B cell (primary cell): ENCODE measurements at regions of chr17 and their contacts with region 1.

Region 1: GRCh38 chr17:49230636-49231562 is at the start of gene PHOSPHO1:
- DNase-seq: peak; percentile 93
- ATAC-seq: peak; percentile 93
- H3K4me3 ChIP-seq: peak within 1 kb of the TSS; percentile 62 to 93 (median 63)
- H3K4me3 Mint-ChIP-seq: peak within 1 kb of the TSS; percentile 93
- H3K27ac ChIP-seq: no peak within 1 kb of the TSS
- H3K27ac Mint-ChIP-seq: peak within 1 kb of the TSS; percentile 78
- H3K4me1 ChIP-seq: peaks cover 25 to 32% of the 10 kb centered on the region in 2 donors
- H3K4me1 Mint-ChIP-seq: peaks cover 21% of the 10 kb centered on the region
- H3K27me3 ChIP-seq: peaks cover 0 to 18% (median 8%) of the 10 kb centered on the region in 4 experiments
- H3K27me3 Mint-ChIP-seq: peaks cover 19% of the 10 kb centered on the region
- CTCF ChIP-seq: no peak
- total RNA-seq, gene PHOSPHO1: 0.15 TPM in 1 of 2 replicates, not detected in the other

Region 2: GRCh38 chr17:49180303-49180702 is 50.6 kb before region 1 on chr17:
- CTCF ChIA-PET with region 1: interaction called, 332 read pairs
- POLR2A ChIA-PET with region 1: interaction called, 7 read pairs
- intact Hi-C with region 1: loop called (anchors 1 kb)
- DNase-seq: peak; percentile 77
- ATAC-seq: peak; percentile 53
- H3K4me3 ChIP-seq: no peak overlapping the region
- H3K4me3 Mint-ChIP-seq: no peak overlapping the region
- H3K27ac ChIP-seq: no peak overlapping the region
- H3K27ac Mint-ChIP-seq: no peak overlapping the region
- H3K4me1 ChIP-seq: peaks cover 0 to 4% of the 10 kb centered on the region in 2 donors
- H3K4me1 Mint-ChIP-seq: peaks cover 2% of the 10 kb centered on the region
- H3K27me3 ChIP-seq: peaks cover 0 to 8% (median 3%) of the 10 kb centered on the region in 4 experiments
- H3K27me3 Mint-ChIP-seq: peaks cover 4% of the 10 kb centered on the region
- CTCF ChIP-seq: peak; percentile 86

Region 3: GRCh38 chr17:49201481-49201927 is 29.4 kb before region 1 on chr17:
- CTCF ChIA-PET with region 1: interaction called, 32 read pairs
- POLR2A ChIA-PET with region 1: no interaction called
- intact Hi-C with region 1: no loop called
- DNase-seq: no peak
- ATAC-seq: no peak
- H3K4me3 ChIP-seq: no peak overlapping the region
- H3K4me3 Mint-ChIP-seq: no peak overlapping the region
- H3K27ac ChIP-seq: no peak overlapping the region
- H3K27ac Mint-ChIP-seq: no peak overlapping the region
- H3K4me1 ChIP-seq: no peaks in the 10 kb centered on the region
- H3K4me1 Mint-ChIP-seq: no peaks in the 10 kb centered on the region
- H3K27me3 ChIP-seq: no peaks in the 10 kb centered on the region
- H3K27me3 Mint-ChIP-seq: no peaks in the 10 kb centered on the region
- CTCF ChIP-seq: no peak

Region 4: DNA sequence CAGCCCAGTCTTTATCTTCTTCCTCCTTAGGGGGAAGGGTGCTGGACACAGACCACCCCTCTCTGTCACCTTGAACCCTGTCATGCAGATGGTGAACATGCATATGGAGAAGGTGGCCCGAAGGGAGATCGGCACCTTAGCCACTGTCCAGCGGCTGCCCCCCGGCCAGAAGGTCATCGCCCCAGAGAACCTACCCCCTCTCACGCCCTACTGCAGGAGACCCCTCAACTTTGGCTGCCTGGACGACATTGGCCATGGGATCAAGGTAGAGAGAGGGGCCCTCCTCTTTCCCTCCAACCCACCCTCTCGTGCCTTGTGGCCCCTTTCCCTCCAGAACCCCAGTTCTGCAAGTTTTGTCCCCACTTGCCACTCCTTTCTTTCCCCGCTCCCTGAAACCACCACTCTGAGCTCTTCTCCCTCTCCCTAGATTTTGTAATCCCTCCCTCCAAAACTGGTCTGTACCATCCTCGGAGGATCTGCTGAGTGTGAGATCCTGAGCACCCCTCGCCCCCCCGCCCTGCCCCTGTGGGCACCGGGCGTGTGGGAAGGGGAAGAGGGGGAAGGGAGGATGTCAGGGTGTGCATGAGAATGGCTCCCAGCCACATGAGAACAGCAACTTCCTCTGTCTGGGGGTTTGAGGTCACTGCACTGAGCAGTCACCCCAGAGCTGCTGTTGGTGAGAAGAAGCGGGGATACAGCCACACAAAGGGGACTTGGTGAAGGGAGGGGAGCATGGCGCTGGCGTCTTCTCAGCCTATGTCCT is 13.1 kb before region 1 on chr17:
- CTCF ChIA-PET with region 1: interaction called, 140 read pairs
- POLR2A ChIA-PET with region 1: interaction called, 6 read pairs
- intact Hi-C with region 1: loop called (anchors 1 kb)
- DNase-seq: peak; percentile 85
- ATAC-seq: peak; percentile 52
- H3K4me3 ChIP-seq: peak overlapping the region in 3 of 5 experiments; percentile 3 to 42 (median 11)
- H3K4me3 Mint-ChIP-seq: peak overlapping the region; percentile 88
- H3K27ac ChIP-seq: peak overlapping the region; percentile 90 to 93
- H3K27ac Mint-ChIP-seq: peak overlapping the region; percentile 97
- H3K4me1 ChIP-seq: peaks cover 73 to 79% of the 10 kb centered on the region in 2 donors
- H3K4me1 Mint-ChIP-seq: peaks cover 66% of the 10 kb centered on the region
- H3K27me3 ChIP-seq: no peaks in the 10 kb centered on the region
- H3K27me3 Mint-ChIP-seq: no peaks in the 10 kb centered on the region
- CTCF ChIP-seq: no peak

Region 5: DNA sequence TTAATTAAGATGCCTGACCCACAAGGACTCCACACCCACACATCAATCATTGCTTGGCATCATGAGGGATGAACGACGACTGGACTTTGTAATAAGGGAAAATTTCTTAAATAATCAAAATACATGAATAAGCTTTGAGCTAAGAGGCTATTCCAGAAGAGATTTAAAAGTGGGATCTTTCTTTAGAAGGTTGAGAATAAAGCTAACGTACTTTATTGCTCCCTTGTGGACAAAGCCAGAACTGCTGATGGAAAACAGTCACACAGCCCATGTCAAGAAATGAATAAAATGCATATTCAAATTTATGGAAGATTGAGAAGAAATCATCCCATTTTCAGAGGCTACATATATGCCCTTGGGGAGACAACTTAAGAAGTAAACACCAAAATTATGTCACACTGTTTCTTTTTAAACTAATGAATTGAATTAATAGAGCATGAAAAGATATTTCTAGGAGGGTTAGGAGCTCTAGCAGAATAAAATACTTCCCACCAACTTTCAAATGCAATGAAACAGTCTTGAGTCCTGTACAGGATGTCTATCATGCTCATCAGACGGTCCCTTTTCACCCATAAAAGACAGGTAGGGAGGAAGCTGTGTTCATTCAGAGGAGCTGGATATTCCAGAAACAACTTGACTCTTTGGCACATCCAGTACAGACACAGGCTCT is 59.9 kb after region 1 on chr17:
- CTCF ChIA-PET with region 1: interaction called, 15 read pairs
- POLR2A ChIA-PET with region 1: no interaction called
- intact Hi-C with region 1: no loop called
- DNase-seq: peak; percentile 39
- ATAC-seq: no peak
- H3K4me3 ChIP-seq: no peak overlapping the region
- H3K4me3 Mint-ChIP-seq: no peak overlapping the region
- H3K27ac ChIP-seq: no peak overlapping the region
- H3K27ac Mint-ChIP-seq: no peak overlapping the region
- H3K4me1 ChIP-seq: no peaks in the 10 kb centered on the region
- H3K4me1 Mint-ChIP-seq: no peaks in the 10 kb centered on the region
- H3K27me3 ChIP-seq: no peaks in the 10 kb centered on the region
- H3K27me3 Mint-ChIP-seq: no peaks in the 10 kb centered on the region
- CTCF ChIP-seq: peak; percentile 81

Region 6: DNA sequence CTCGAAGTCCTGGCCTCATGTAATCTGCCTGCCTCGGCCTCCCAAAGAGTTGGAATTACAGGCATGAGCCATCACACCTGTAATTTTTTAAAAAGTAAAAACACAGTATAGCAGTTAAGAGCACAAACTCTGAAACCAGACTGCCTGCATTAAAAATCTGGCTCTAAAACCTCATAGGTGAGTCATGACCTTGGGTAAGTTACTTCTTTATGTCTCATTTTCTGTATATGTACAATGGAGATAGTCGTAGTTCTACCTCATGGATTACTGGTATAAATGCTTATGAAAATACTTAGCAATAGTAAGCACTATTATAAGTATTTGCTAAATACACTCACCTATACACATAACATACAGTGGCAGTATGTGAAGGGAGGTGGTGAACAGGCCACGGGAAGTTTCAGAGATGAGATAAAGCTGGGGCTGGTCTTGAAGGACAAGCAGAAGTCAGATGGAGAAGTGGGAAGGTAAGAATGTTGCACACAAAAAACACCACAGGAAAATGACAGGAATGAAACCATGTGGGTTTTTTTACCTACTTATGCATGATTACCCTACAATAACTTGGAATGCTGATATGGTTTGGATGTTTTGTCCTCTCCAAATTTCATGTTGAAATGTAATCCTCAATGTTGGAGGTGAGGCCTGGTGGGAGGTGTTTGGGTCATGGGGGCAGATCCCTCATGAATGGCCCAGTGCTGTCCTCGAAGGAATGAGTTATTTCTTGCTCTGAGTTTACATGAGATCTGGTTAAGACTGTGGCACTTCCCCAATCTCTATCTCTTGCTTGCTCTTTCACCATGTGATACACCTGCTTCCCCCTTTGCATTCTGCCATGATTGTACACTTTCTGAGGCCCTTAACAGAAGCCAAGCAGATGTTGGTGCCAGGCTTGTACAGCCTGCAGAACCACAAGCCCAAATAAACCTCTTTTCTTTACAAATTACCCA is 97.2 kb after region 1 on chr17:
- CTCF ChIA-PET with region 1: no interaction called
- POLR2A ChIA-PET with region 1: no interaction called
- intact Hi-C with region 1: no loop called
- DNase-seq: peak; percentile 60
- ATAC-seq: peak; percentile 77
- H3K4me3 ChIP-seq: no peak overlapping the region
- H3K4me3 Mint-ChIP-seq: peak overlapping the region; percentile 4
- H3K27ac ChIP-seq: peak overlapping the region; percentile 15 to 76
- H3K27ac Mint-ChIP-seq: peak overlapping the region; percentile 85
- H3K4me1 ChIP-seq: peaks cover 15 to 16% of the 10 kb centered on the region in 2 donors
- H3K4me1 Mint-ChIP-seq: peaks cover 57% of the 10 kb centered on the region
- H3K27me3 ChIP-seq: no peaks in the 10 kb centered on the region
- H3K27me3 Mint-ChIP-seq: no peaks in the 10 kb centered on the region
- CTCF ChIP-seq: no peak

Region 7: GRCh38 chr17:49523706-49524472 is 293.0 kb after region 1 on chr17:
- CTCF ChIA-PET with region 1: no interaction called
- POLR2A ChIA-PET with region 1: no interaction called
- intact Hi-C with region 1: no loop called
- DNase-seq: no peak
- ATAC-seq: no peak
- H3K4me3 ChIP-seq: no peak overlapping the region
- H3K4me3 Mint-ChIP-seq: no peak overlapping the region
- H3K27ac ChIP-seq: no peak overlapping the region
- H3K27ac Mint-ChIP-seq: no peak overlapping the region
- H3K4me1 ChIP-seq: no peaks in the 10 kb centered on the region
- H3K4me1 Mint-ChIP-seq: no peaks in the 10 kb centered on the region
- H3K27me3 ChIP-seq: no peaks in the 10 kb centered on the region
- H3K27me3 Mint-ChIP-seq: peaks cover 37% of the 10 kb centered on the region
- CTCF ChIP-seq: no peak

Region 8: GRCh38 chr17:49763735-49764558 is 533.0 kb after region 1 on chr17 and contains the start of gene FAM117A:
- CTCF ChIA-PET with region 1: no interaction called
- POLR2A ChIA-PET with region 1: no interaction called
- intact Hi-C with region 1: loop called (anchors 5 kb)
- DNase-seq: peak; percentile 98
- ATAC-seq: peak; percentile 89
- H3K4me3 ChIP-seq: peak within 1 kb of the TSS; percentile 63 to 77 (median 76)
- H3K4me3 Mint-ChIP-seq: peak within 1 kb of the TSS; percentile 96
- H3K27ac ChIP-seq: peak within 1 kb of the TSS; percentile 39 to 63
- H3K27ac Mint-ChIP-seq: peak within 1 kb of the TSS; percentile 87
- H3K4me1 ChIP-seq: peaks cover 42 to 46% of the 10 kb centered on the region in 2 donors
- H3K4me1 Mint-ChIP-seq: peaks cover 52% of the 10 kb centered on the region
- H3K27me3 ChIP-seq: no peaks in the 10 kb centered on the region
- H3K27me3 Mint-ChIP-seq: no peaks in the 10 kb centered on the region
- CTCF ChIP-seq: no peak
- total RNA-seq, gene FAM117A: 93.3 and 93.4 TPM in 2 replicates